Esophagus squamous epithelium (tissue), 5 donors: ENCODE measurements at regions of chr11 and their contacts with region 1.

Region 1: GRCh38 chr11:19553683-19554333 is 158.8 kb upstream of the NAV2 start:
- DNase-seq: no peak
- H3K4me3 ChIP-seq: no peak overlapping the region
- H3K27ac ChIP-seq: no peak overlapping the region
- H3K4me1 ChIP-seq: peaks cover 0 to 4% (median 0%) of the 10 kb centered on the region in 3 donors
- H3K27me3 ChIP-seq: peaks cover 0 to 13% (median 0%) of the 10 kb centered on the region in 4 donors
- CTCF ChIP-seq: peak; percentile 66 to 92 (median 86)
- POLR2A ChIP-seq: no peak

Region 2: GRCh38 chr11:19071255-19071654 is 482.6 kb before region 1 on chr11:
- intact Hi-C with region 1: loop called (anchors 5 kb)
- DNase-seq: no peak
- H3K4me3 ChIP-seq: peak overlapping the region in 1 of 4 donors; percentile 35
- H3K27ac ChIP-seq: peak overlapping the region in 3 of 4 donors; percentile 54 to 75 (median 66)
- H3K4me1 ChIP-seq: peaks cover 8 to 49% (median 8%) of the 10 kb centered on the region in 3 donors
- H3K27me3 ChIP-seq: peaks cover 0 to 18% (median 0%) of the 10 kb centered on the region in 4 donors
- CTCF ChIP-seq: peak; percentile 71 to 97 (median 92)
- POLR2A ChIP-seq: no peak

Region 3: GRCh38 chr11:19259487-19260345 is 294.1 kb before region 1 on chr11:
- intact Hi-C with region 1: loop called (anchors 10 kb)
- DNase-seq: no peak
- H3K4me3 ChIP-seq: peak overlapping the region in 1 of 4 donors; percentile 47
- H3K27ac ChIP-seq: no peak overlapping the region
- H3K4me1 ChIP-seq: no peaks in the 10 kb centered on the region
- H3K27me3 ChIP-seq: peaks cover 0 to 7% (median 0%) of the 10 kb centered on the region in 4 donors
- CTCF ChIP-seq: peak; percentile 71 to 94 (median 89)
- POLR2A ChIP-seq: no peak

Region 4: GRCh38 chr11:19311308-19312030 is 242.3 kb before region 1 on chr11:
- intact Hi-C with region 1: loop called (anchors 5 kb)
- DNase-seq: no peak
- H3K4me3 ChIP-seq: no peak overlapping the region
- H3K27ac ChIP-seq: no peak overlapping the region
- H3K4me1 ChIP-seq: peaks cover 0 to 11% (median 4%) of the 10 kb centered on the region in 3 donors
- H3K27me3 ChIP-seq: no peaks in the 10 kb centered on the region
- CTCF ChIP-seq: peak; percentile 34 to 79 (median 70)
- POLR2A ChIP-seq: no peak

Region 5: DNA sequence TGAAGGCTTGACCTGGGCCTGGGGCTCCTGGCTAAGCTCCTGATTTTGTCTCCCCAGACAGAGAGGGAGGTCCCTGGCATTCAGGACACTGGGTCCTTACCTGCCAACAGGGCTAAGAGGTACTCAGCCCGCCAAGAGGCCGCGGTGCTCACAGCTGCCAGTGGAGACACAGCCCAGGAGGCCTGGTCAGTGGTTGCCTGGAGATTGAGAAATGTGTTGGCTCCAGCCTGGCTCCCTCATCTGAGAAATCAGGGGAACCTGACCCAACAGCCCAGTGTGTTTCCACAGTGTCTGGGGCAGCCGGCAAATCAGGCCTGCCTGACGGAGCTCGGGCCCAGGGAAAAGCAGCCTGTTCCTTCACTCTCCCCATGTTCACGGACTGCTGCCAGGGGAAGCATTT is 79.5 kb after region 1 on chr11:
- intact Hi-C with region 1: no loop called
- DNase-seq: no peak
- H3K4me3 ChIP-seq: no peak overlapping the region
- H3K27ac ChIP-seq: peak overlapping the region in 2 of 4 donors; percentile 11 to 42
- H3K4me1 ChIP-seq: peaks cover under 1 to 26% (median 6%) of the 10 kb centered on the region in 3 donors
- H3K27me3 ChIP-seq: no peaks in the 10 kb centered on the region
- CTCF ChIP-seq: no peak
- POLR2A ChIP-seq: no peak

Region 6: DNA sequence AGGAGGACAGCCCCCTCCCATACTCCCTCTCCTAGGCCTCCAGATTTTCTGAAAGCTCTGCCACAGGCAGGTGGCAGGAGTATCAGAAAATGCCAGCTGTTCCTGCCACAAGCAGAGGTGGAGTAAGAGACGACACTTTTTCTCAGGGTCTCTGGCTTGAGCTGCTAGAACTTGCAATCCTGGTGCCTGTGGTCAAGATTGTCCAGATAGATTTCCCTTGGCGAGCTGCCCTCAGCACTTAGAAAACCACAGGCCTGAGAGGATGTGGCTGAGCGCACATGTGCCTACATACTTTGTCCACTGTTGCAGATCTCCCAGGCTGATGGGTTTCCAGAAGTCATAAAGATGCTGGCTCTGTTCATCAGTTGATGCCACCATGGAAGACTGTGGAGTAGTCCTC is 93.1 kb after region 1 on chr11:
- intact Hi-C with region 1: no loop called
- DNase-seq: no peak
- H3K4me3 ChIP-seq: no peak overlapping the region
- H3K27ac ChIP-seq: no peak overlapping the region
- H3K4me1 ChIP-seq: peaks cover 0 to 14% (median 6%) of the 10 kb centered on the region in 3 donors
- H3K27me3 ChIP-seq: no peaks in the 10 kb centered on the region
- CTCF ChIP-seq: no peak
- POLR2A ChIP-seq: no peak